Breast epithelium (tissue), 4 donors: ENCODE measurements at regions of chr4 and their contacts with region 1.

Region 1: DNA sequence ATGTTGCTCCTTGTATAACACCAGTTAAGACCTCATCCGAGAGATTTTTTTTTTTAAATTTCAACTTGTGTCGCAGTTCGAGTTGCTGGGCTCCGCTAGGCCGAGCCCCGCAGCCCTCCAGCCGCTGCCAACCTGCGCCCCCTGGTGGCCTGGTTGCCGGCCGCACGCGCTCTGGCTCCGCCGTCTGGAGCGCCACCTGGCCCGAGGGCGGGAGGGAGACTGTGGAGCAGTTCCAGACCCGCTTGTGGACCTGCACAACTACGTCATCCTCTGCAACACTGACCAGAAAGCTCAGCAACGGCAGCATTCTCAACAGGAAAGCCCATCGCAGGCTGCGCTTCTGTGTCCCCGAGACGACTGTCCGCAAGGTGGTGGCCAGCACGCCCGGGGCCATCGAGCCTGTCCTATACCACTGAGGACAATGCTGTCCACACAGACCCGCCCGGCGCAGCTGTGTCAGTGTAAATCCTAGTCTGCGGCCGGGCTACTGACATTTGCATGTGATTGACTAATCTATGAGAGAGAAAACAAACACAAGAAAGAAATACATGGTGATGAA is 39.1 kb downstream of the ARL9 start:
- DNase-seq: peak; percentile 62 to 83
- H3K4me3 ChIP-seq: peak overlapping the region; percentile 9 to 63 (median 44)
- H3K27ac ChIP-seq: no peak overlapping the region
- H3K4me1 ChIP-seq: no peaks in the 10 kb centered on the region
- H3K27me3 ChIP-seq: no peaks in the 10 kb centered on the region
- CTCF ChIP-seq: peak; percentile 82 to 92 (median 89)
- POLR2A ChIP-seq: no peak

Region 2: GRCh38 chr4:55609393-55609866 is 935.2 kb before region 1 on chr4:
- intact Hi-C with region 1: no loop called
- DNase-seq: no peak
- H3K4me3 ChIP-seq: no peak overlapping the region
- H3K27ac ChIP-seq: no peak overlapping the region
- H3K4me1 ChIP-seq: no peaks in the 10 kb centered on the region
- H3K27me3 ChIP-seq: no peaks in the 10 kb centered on the region
- CTCF ChIP-seq: no peak
- POLR2A ChIP-seq: no peak

Region 3: GRCh38 chr4:56435306-56435926 is 109.2 kb before region 1 on chr4 and contains the start of gene PPAT:
- intact Hi-C with region 1: loop called (anchors 10 kb)
- DNase-seq: peak; percentile 96 to 97
- H3K4me3 ChIP-seq: peak within 1 kb of the TSS; percentile 62 to 91 (median 80)
- H3K27ac ChIP-seq: peak within 1 kb of the TSS; percentile 89 to 94
- H3K4me1 ChIP-seq: no peaks in the 10 kb centered on the region
- H3K27me3 ChIP-seq: no peaks in the 10 kb centered on the region
- CTCF ChIP-seq: peak in 2 of 3 donors; percentile 10 to 45
- POLR2A ChIP-seq: no peak
- total RNA-seq, gene PPAT: 5.6 to 8.9 (median 6.6) TPM